CD4-positive, alpha-beta T cell (primary cell): ENCODE measurements at regions of chr12 and their contacts with region 1.

Region 1: DNA sequence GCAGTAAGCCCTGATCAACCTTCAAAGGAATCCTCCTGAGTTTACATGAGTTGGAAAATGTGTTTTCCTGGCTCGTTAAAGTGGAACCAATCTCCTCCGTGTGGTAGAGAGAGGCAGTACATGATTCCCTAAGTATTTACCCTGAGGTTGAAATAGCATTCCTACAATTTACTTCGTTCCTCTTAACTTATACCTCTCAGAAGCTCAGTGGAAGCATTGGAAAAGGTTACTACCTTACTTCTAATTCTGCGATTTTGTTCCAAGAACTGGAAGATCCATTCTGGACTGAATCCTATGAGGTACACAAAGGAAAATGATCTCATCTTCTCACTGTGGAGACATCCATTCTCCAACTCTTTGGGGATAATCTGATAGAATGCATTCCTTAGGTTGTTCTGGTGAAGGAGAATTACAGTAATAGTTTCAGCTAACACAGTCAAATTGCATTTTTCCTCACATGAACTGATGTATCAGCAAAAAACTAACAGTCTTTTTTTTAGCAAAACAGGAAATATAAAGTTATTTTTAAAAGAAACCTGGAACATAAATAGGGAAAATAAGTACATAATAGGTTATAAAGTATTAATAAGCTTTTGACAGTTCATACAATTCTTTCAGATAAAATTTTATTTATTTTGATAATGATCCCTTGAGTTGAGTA is 475.6 kb downstream of the PDZRN4 start:
- DNase-seq: no peak
- ATAC-seq: no peak
- H3K4me3 ChIP-seq: no peak overlapping the region
- H3K4me3 Mint-ChIP-seq: no peak overlapping the region
- H3K27ac ChIP-seq: no peak overlapping the region
- H3K27ac Mint-ChIP-seq: no peak overlapping the region
- H3K4me1 ChIP-seq: no peaks in the 10 kb centered on the region
- H3K4me1 Mint-ChIP-seq: no peaks in the 10 kb centered on the region
- H3K27me3 ChIP-seq: no peaks in the 10 kb centered on the region
- H3K27me3 Mint-ChIP-seq: no peaks in the 10 kb centered on the region
- CTCF ChIP-seq: no peak

Region 2: DNA sequence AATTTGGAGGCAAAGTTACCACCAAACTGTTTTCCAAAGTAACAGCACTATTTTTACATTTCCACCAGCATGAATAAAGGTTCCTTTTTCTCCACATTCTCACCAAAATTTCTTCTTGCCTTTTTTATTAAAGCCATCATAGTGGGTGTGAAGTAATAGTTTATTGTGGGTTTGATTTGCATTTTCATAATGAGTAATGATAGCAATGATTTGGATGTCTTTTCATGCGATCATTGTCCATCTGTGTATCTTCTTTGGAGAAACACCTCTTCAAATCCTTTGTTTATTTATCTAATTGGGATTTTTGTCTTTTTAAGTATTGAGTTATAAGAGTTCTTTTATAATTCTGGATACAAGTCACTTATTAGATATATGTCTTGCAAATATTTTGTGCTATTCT is 798.8 kb before region 1 on chr12:
- CTCF ChIA-PET with region 1: no interaction called
- POLR2A ChIA-PET with region 1: no interaction called
- intact Hi-C with region 1: loop called in 1 of 2 experiments (anchors 10 kb)
- DNase-seq: no peak
- ATAC-seq: no peak
- H3K4me3 ChIP-seq: no peak overlapping the region
- H3K4me3 Mint-ChIP-seq: no peak overlapping the region
- H3K27ac ChIP-seq: no peak overlapping the region
- H3K27ac Mint-ChIP-seq: no peak overlapping the region
- H3K4me1 ChIP-seq: no peaks in the 10 kb centered on the region
- H3K4me1 Mint-ChIP-seq: no peaks in the 10 kb centered on the region
- H3K27me3 ChIP-seq: no peaks in the 10 kb centered on the region
- H3K27me3 Mint-ChIP-seq: no peaks in the 10 kb centered on the region
- CTCF ChIP-seq: no peak

Region 3: DNA sequence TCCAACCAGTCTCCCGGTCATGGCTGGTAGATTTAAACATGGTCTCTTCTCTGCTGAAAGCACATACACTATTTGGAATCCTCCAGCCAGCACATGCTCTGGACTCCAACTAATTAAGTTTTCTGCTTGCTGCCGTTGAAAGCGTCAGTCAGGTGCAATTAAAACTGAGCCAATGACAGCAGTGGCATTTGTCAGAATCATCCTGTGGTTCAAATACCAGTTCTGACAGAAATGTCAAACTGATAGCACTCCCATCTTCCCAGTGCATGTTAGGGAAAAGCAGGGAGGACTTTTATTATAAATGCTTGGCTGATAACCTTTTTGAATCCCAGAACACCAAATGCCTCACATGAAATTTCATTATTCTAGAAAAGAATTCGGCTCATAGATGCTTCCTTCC is 73.8 kb before region 1 on chr12:
- CTCF ChIA-PET with region 1: no interaction called
- POLR2A ChIA-PET with region 1: no interaction called
- intact Hi-C with region 1: no loop called
- DNase-seq: no peak
- ATAC-seq: no peak
- H3K4me3 ChIP-seq: no peak overlapping the region
- H3K4me3 Mint-ChIP-seq: no peak overlapping the region
- H3K27ac ChIP-seq: no peak overlapping the region
- H3K27ac Mint-ChIP-seq: no peak overlapping the region
- H3K4me1 ChIP-seq: no peaks in the 10 kb centered on the region
- H3K4me1 Mint-ChIP-seq: no peaks in the 10 kb centered on the region
- H3K27me3 ChIP-seq: no peaks in the 10 kb centered on the region
- H3K27me3 Mint-ChIP-seq: no peaks in the 10 kb centered on the region
- CTCF ChIP-seq: no peak